Ascending aorta (tissue), 2 donors: ENCODE measurements at regions of chr10 and their contacts with region 1.

Region 1: DNA sequence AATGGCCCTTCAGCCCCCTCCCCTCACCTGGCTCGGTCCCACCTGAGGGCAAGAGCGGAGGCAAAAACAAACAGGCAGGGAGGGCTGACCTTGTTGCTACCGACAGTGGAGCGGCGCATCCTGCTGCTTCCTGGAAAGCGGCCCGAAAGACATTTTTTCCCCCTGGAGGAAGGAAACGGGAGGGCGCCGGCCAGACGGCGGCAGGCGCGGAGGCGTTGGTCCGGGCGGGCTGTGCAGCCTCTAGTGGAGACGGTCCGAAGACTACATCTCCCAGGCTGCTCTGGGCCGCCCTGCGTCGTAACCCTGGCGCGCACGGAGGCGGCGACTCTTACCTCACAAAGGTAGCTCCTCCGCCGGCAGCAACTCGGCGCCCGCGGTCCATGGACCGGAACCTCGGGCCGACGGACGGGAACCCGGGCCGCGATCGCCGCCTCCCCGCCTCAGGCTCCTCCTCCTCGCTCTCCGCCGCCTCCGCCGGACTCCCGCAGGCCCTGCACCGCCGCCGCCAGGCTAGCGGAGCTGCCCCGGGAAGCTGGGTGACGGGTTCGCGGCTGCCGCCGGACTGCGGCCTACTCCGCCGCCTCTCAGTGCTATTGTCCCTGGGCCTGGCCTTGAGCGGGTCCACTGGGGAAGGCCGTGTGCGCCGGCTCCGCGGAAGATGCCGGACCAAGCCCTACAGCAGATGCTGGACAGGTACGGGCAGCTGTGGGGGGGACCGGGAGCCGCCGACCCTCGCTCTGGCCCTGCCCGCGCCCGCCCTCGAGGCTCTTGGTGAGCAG is at the starts of genes CPEB3 and MARCHF5:
- DNase-seq: peak; percentile 84 to 98
- H3K4me3 ChIP-seq: peak within 1 kb of the TSS; percentile 86 to 100
- H3K27ac ChIP-seq: peak within 1 kb of the TSS; percentile 90 to 98
- H3K4me1 ChIP-seq: peaks cover 0 to 3% of the 10 kb centered on the region in 2 donors
- H3K27me3 ChIP-seq: no peaks in the 10 kb centered on the region
- CTCF ChIP-seq: peak; percentile 61 to 89 (median 75)
- total RNA-seq, gene CPEB3: 2.8 TPM
- total RNA-seq, gene MARCHF5: 5.5 TPM

Region 2: GRCh38 chr10:92240289-92241157 is 50.5 kb before region 1 on chr10:
- intact Hi-C with region 1: loop called (anchors 1 kb)
- DNase-seq: peak; percentile 10 to 71
- H3K4me3 ChIP-seq: peak overlapping the region; percentile 70 to 73
- H3K27ac ChIP-seq: peak overlapping the region; percentile 57 to 64
- H3K4me1 ChIP-seq: peaks cover 0 to 16% of the 10 kb centered on the region in 2 donors
- H3K27me3 ChIP-seq: no peaks in the 10 kb centered on the region
- CTCF ChIP-seq: no peak

Region 3: GRCh38 chr10:92274071-92274470 is 17.0 kb before region 1 on chr10:
- intact Hi-C with region 1: no loop called
- DNase-seq: no peak
- H3K4me3 ChIP-seq: no peak overlapping the region
- H3K27ac ChIP-seq: no peak overlapping the region
- H3K4me1 ChIP-seq: peaks cover 0 to 5% of the 10 kb centered on the region in 2 donors
- H3K27me3 ChIP-seq: no peaks in the 10 kb centered on the region
- CTCF ChIP-seq: no peak